ENCODE measurements at regions of chr10 and their contacts with region 1.

Region 1: DNA sequence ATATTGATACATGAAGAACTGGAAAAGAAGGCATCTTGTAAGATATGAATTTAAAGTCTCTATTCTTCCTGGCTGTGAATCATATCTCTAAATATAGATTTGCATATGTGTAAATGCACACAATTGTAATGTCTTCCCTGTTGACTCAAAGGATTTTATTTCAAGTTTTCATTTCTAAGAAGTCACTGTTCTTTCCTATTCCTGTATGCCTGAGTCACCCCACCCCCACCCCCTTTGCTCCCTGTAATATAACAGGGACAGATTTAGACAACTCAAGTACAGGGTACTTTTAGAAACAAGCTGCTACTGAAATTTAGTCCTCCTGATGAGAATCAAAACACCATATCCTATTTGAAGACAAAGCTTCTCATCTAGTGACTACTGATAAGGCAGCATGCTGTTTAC is 43.0 kb upstream of the HECTD2 start:
- DNase-seq: no peak
- ATAC-seq: no peak
- H3K4me3 ChIP-seq: no peak overlapping the region
- H3K27ac ChIP-seq: no peak overlapping the region
- H3K4me1 ChIP-seq: no peaks in the 10 kb centered on the region
- H3K27me3 ChIP-seq: no peaks in the 10 kb centered on the region

Region 2: GRCh38 chr10:90905925-90906324 is 461.2 kb before region 1 on chr10:
- intact Hi-C with region 1: loop called in 1 of 2 experiments (anchors 10 kb)
- DNase-seq: no peak
- ATAC-seq: no peak
- H3K4me3 ChIP-seq: no peak overlapping the region
- H3K27ac ChIP-seq: no peak overlapping the region
- H3K4me1 ChIP-seq: no peaks in the 10 kb centered on the region
- H3K27me3 ChIP-seq: no peaks in the 10 kb centered on the region

Region 3: DNA sequence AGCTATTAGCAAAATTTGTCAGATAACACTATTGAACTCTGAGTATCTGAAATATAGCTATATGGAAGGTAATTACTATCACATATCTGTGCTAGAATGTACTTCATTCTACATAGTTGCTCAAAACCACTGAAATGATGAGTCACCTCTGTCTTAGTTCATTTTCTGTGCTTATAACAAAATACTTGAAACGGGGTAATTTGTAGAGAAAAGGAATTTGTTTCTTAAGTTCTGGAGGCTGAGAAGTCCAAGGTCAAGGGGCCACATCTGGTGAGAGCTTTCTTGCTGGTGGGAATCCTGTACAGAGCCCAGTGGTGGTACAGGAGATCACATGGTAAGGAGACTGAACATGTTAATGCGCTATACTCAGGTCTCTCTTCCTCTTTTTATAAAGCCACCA is 389.2 kb after region 1 on chr10:
- intact Hi-C with region 1: no loop called
- DNase-seq: no peak
- ATAC-seq: no peak
- H3K4me3 ChIP-seq: no peak overlapping the region
- H3K27ac ChIP-seq: no peak overlapping the region
- H3K4me1 ChIP-seq: no peaks in the 10 kb centered on the region
- H3K27me3 ChIP-seq: no peaks in the 10 kb centered on the region